ENCODE measurements at regions of chr19 and their contacts with region 1.

Region 1: DNA sequence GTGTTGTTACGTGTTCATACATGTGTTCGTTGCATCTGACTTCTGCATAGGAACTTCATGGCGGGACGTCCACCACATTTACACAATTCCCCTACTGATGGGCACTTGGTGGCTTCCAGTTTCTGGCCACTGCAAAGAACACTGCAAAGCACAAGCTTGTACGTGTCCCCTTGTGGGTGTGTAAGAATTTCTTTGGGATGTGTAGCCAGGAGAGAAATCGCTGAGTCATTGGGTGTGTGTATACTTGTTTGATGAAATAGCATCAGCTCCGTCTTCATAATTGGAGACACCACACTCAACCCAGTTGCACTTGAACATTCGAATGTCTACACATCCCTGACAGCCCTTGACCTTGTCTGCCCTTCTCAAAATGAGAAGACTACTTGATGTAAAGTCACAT is 19.2 kb downstream of the KLK5 start:
- DNase-seq: no peak

Region 2: DNA sequence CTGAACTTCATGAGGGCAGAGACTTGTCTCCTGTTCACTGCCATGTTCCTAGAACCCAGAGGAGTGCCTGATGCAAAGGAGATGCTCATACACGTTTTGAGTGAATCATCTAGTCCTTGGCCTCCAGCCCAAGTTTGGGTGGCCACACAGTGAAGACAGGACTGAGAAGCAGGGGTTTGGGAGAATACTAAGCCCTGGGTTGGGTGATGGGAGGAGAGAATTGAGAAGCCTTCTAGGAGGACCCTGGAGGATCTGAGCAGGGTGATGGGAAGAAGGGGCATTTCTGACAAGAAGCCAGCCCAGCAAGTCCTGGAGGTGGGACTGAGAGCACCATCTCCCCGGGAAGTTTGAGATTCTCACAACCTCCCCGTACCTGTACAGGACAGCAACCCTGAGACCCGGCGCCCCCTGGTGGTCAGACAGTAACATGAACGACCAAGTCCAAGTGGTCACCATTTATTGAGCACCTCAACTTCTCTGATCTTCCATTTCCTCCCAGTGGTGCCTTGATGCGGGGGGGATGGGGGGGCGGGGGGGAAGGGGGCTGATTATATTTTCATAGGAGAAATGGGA is 163.6 kb after region 1 on chr19:
- intact Hi-C with region 1: loop called (anchors 10 kb)
- DNase-seq: peak; percentile 88

Measured in cardiac septum (tissue), 1 donor.